Activated T-helper 1 cell treated with anti-CD3 and anti-CD28 coated beads, Interleukin-12 subunit alpha, Interleukin-12 subunit beta, Interleukin-2, Interleukin-4 antibody, amounts not matched to agents 30 ng/mL and 10 ng/mL and 1 ng/mL, durations not matched to agents 14 hours and 24 hours and 36 hours (primary cell): ENCODE measurements at regions of chr3 and their contacts with region 1.

Region 1: DNA sequence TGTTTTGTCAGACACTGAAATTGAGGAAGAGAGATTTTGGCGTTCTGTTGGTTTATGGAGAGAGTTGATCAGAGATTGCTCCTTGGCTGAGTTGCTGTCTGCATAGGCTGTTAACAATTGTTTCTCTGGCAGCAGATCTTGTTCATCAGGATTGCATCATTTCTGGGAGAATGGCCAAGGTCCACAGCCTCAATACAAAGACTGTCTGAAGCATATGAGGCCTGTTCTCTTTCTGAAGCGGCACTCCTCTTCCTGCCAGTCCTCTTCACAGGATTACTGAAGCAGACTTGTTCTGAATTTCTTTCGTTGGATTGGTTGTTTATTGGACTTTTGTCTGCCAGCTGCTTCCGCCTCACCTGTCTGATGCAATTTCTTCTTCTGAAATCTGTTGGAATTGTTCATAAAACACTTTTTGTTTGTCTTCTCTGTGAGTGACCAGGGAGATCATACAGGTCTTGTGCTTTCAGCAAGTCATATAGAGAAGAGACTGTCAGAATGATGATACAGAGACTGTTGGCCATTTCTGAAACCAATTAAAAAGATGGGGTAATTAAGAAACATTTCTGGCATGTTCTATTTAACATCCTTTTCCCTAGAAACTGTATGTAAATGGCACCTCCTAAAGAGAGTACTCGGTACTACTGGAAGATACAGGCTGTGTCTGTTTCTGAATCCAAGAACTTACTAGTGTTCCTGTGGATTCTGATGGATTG is 25.5 kb downstream of the SETD5 start:
- DNase-seq: no peak
- H3K4me3 Mint-ChIP-seq: peak overlapping the region; percentile 41
- H3K27ac Mint-ChIP-seq: peak overlapping the region; percentile 84
- H3K4me1 Mint-ChIP-seq: peaks cover 64% of the 10 kb centered on the region
- H3K27me3 Mint-ChIP-seq: no peaks in the 10 kb centered on the region

Region 2: DNA sequence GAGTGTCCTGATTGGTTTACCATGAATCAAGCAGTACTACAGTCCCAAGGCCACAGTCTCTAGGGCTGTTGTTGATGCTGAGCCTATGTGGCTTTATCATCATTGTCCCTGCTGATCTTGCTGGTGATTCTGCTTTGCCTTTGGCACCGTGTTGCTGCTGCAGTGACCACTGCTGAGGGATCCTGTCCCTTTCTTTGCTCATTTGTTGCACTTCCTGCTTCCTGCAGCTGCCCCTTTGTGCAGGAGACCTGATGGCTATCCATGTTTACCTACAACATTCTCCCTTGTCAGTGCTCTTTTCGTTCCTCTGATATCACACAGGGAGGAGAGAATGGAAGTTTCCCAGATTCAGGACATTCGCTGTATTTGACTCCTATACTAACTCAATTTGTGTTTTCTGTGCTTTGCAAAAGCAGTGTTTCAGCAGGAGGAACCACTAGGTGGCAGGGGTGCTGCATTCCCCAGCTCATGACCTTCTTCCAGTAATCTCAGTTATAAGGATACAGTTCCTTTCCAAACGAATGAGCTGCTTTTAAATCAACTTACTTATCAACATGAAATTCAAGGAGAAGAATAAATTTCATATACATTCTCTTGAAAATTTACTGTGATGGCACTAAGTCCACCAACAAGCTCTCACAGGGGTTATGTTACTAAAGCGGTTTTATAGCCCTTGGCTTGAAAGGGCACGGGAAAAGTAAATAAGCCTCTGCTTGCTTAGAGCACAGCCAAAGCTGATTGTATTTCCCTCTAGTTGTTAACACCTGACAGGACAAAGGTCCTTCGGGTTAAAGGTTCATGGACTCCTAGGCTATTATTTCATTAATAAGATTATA is 69.7 kb before region 1 on chr3:
- intact Hi-C with region 1: loop called (anchors 1 kb)
- DNase-seq: peak; percentile 39
- H3K4me3 Mint-ChIP-seq: no peak overlapping the region
- H3K27ac Mint-ChIP-seq: no peak overlapping the region
- H3K4me1 Mint-ChIP-seq: peaks cover 20% of the 10 kb centered on the region
- H3K27me3 Mint-ChIP-seq: no peaks in the 10 kb centered on the region

Region 3: DNA sequence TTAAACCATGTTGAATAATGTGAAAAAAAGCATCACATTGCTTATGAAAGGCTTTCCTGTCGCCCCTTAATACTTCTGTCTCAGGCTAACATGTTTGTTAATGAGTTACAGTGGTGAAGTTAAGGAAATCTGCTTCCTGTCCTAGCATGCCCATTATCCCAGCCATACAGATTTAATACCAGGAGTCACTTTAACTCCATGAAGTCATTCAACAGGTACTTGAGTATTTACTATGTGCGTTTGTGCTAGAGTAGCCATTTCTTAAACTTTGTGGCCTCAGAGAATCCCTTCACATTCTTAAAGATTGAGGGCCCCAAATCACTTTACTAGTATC is 35.6 kb before region 1 on chr3:
- intact Hi-C with region 1: loop called (anchors 5 kb)
- DNase-seq: no peak
- H3K4me3 Mint-ChIP-seq: no peak overlapping the region
- H3K27ac Mint-ChIP-seq: no peak overlapping the region
- H3K4me1 Mint-ChIP-seq: peaks cover 25% of the 10 kb centered on the region
- H3K27me3 Mint-ChIP-seq: no peaks in the 10 kb centered on the region

Region 4: DNA sequence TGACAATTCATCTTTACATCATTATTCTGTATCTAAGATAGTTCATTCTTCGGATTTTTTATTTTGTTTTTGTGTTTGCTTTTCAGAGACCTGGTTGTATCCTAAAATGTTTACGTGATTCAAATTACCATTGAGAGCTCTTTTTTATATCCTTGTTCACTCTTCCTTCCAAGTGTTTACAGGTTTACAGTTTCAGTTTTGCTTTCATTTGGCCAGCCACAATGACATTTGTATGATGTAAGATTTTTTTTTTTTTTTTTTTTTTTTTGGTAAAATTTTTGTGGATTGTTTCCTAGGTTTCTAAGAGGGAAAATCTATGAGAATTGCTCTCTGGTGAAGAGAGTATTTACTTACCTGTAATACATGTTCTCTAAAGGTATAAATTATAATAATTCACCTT is 29.5 kb after region 1 on chr3:
- intact Hi-C with region 1: loop called (anchors 5 kb)
- DNase-seq: no peak
- H3K4me3 Mint-ChIP-seq: peak overlapping the region; percentile 69
- H3K27ac Mint-ChIP-seq: peak overlapping the region; percentile 93
- H3K4me1 Mint-ChIP-seq: peaks cover 47% of the 10 kb centered on the region
- H3K27me3 Mint-ChIP-seq: no peaks in the 10 kb centered on the region